ENCODE measurements at regions of chr11 and their contacts with region 1.

Region 1: DNA sequence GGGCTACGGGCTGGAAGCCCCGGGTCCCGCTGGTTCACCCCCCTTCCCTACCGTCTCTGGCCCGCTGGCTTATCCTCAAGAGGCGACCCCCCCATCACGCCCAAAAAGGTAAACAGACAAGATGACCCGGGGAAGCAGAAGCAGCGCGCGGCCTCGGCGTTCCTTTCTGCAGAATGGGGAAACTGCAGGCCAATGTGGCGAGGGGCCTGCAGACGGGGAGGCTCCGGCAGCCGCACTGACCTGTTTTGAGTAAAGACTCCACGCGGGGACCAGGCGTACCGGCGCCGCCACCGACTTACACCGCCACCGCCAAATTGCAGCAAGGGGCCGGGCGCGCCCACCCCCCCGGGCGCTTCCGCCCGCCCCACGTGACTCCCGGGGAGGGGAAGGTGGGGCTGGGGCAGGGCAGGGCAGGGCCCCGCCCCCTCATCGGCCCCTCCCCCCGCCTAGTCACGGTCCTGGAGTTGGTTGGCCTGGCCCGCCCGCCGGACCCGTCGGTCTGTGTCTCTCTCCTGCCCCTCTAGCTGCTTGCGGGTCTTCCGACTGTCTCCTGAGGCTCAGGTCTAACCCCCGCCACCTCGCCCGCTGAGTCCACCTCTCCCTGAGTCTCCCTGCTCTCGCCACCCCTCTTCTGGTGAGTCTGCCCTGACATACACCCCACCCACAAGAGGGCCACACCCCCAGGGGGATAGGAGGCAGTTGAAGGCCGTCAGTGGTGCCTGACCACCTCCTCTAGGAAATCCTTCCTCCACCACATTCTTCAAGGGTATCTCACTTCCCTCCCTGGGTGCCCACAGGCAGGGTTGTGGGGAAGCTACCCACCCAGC is at the start of gene ARAP1:
- DNase-seq: no peak
- H3K4me3 ChIP-seq: peak within 1 kb of the TSS; percentile 61
- CTCF ChIP-seq: no peak

Region 2: DNA sequence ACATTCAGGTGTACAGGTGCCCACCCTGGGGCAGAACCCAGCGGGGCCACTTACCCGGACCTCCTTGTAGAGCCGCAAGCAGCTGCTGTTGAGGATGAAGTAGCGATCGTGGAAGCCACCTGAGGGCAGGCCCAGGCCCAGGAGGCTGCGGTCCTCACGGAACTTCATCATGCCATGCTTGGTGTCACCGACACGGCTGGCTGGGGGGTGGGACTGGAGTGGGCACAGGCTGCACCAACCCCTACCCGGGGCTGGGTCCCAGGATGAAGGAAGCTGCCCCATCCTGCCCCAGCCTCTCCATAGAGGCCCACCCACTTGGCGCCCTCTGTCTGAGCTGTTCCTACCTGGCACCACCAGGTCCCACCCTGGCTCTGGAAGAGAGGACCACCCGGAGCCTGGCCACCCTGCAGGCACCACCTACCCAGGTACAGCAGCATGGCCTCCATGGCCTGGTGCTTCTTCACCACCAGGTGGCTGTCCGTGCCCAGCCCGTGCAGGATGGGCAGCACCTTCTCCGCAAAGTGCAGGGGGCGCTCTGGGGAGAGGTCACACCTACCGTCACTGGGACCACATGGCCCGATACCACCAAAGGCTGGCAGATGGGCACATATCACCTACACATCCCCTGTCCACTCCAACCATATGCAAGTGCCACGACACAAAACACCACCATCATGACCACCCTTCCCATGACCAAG is 58.9 kb before region 1 on chr11:
- in situ Hi-C with region 1: loop called (anchors 5 kb)
- DNase-seq: no peak
- H3K4me3 ChIP-seq: no peak overlapping the region
- CTCF ChIP-seq: no peak